ENCODE measurements at regions of chr14 and their contacts with region 1.

Region 1: DNA sequence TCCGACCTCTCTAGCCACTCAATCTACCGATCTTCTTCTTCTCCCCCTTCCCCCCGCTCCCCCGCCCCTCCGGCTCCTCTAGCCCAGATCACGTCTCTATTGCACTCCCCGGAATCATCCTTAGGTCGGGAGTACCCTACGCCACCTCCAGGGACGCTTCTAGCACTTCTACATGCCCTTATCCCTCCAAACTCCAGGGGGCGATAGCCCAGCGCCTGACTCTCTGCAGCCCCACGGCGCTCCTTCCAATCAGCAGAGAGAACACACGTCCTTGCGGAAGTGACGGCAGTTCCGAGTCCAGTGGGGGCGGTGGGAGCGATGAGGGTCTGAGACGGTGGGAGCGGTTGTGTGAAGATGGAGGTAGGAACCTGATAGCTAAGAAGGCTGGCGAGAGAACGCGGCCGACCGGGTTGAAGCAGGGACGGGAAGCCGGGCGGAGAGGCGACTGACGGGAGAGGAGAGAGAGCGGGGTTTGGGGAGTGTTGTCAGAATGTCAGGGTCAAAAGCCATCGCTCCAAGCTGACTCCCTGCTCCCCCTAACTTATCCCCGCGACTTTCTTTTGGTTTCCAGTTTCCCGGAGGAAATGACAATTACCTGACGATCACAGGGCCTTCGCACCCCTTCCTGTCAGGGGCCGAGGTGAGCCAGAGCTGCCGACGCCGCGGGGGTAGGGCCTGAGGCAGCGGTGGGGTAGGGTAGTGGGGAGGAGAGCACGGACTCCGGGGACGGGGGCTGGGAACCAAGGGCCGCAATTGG is at the starts of genes RAB2B and TOX4:
- DNase-seq: peak; percentile 83 to 98 (median 97)
- ATAC-seq: peak; percentile 99
- H3K4me3 ChIP-seq: peak within 1 kb of the TSS; percentile 99
- H3K4me3 Mint-ChIP-seq: peak within 1 kb of the TSS; percentile 96 to 100 (median 99)
- H3K27ac ChIP-seq: peak within 1 kb of the TSS; percentile 88
- H3K27ac Mint-ChIP-seq: peak within 1 kb of the TSS; percentile 93 to 100 (median 98)
- H3K4me1 ChIP-seq: peaks cover 21 to 22% of the 10 kb centered on the region in 2 donors
- H3K4me1 Mint-ChIP-seq: peaks cover 18 to 74% (median 58%) of the 10 kb centered on the region in 7 donors
- H3K27me3 ChIP-seq: no peaks in the 10 kb centered on the region
- H3K27me3 Mint-ChIP-seq: no peaks in the 10 kb centered on the region
- total RNA-seq, gene RAB2B: 26.6 to 32.8 (median 30.5) TPM
- total RNA-seq, gene TOX4: 78.5 to 116 (median 86.5) TPM

Region 2: GRCh38 chr14:21408147-21408546 is 69.0 kb before region 1 on chr14:
- CTCF ChIA-PET with region 1: no interaction called
- POLR2A ChIA-PET with region 1: no interaction called
- intact Hi-C with region 1: no loop called
- DNase-seq: no peak
- ATAC-seq: no peak
- H3K4me3 ChIP-seq: no peak overlapping the region
- H3K4me3 Mint-ChIP-seq: no peak overlapping the region
- H3K27ac ChIP-seq: no peak overlapping the region
- H3K27ac Mint-ChIP-seq: peak overlapping the region in 1 of 9 donors; percentile 28
- H3K4me1 ChIP-seq: no peaks in the 10 kb centered on the region
- H3K4me1 Mint-ChIP-seq: peaks cover 0 to 8% (median 0%) of the 10 kb centered on the region in 7 donors
- H3K27me3 ChIP-seq: no peaks in the 10 kb centered on the region
- H3K27me3 Mint-ChIP-seq: no peaks in the 10 kb centered on the region

Region 3: DNA sequence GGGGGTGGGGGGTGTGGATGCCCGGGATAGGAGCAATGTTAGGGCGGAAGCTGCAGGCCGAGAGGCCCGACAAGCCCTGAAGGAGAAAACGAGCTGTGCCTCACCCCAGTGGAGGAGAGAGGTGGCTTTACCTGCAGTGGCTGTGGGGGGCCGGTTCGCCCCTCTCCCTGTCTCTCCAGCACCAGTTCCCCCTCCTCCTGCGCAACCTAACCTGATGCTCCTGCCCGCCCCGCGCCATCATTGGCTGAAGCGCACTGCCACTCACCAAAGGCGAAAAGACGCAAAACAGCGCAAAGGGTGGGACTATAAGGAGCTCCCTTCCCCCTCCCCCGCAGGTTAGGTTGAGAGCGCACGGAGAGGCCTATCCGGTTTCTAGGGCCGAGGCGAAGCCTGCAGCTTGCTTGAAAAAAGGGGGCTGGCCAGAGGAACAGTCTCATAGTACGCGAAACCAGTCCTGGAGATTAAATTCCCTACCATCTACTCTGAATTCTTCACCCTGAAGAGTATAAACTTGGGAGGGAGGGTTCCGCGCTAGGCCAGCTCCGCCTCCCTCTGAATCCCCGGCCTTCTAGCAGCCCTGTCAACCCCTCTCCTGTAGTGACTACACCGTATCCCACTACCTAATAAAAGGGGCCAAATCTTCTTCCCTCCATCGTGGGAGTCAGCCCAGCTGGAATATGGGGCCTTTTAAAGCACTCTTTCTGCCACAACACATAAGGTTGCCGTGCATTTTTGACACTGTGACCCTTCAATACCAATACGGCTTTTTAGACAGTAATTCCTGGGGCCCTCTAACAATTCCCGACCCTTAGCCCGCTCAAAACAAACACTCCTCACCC is 39.8 kb before region 1 on chr14:
- CTCF ChIA-PET with region 1: interaction called, 4 read pairs
- POLR2A ChIA-PET with region 1: interaction called, 7 read pairs
- intact Hi-C with region 1: loop called (anchors 1 kb)
- DNase-seq: peak; percentile 93 to 100 (median 99)
- ATAC-seq: peak; percentile 100
- H3K4me3 ChIP-seq: peak overlapping the region; percentile 87
- H3K4me3 Mint-ChIP-seq: peak overlapping the region; percentile 86 to 97 (median 92)
- H3K27ac ChIP-seq: peak overlapping the region; percentile 94
- H3K27ac Mint-ChIP-seq: peak overlapping the region; percentile 90 to 98 (median 94)
- H3K4me1 ChIP-seq: peaks cover 13 to 22% of the 10 kb centered on the region in 2 donors
- H3K4me1 Mint-ChIP-seq: peaks cover 43 to 86% (median 68%) of the 10 kb centered on the region in 7 donors
- H3K27me3 ChIP-seq: no peaks in the 10 kb centered on the region
- H3K27me3 Mint-ChIP-seq: no peaks in the 10 kb centered on the region

Region 4: GRCh38 chr14:21498553-21499526 is 21.7 kb after region 1 on chr14:
- CTCF ChIA-PET with region 1: interaction called, 3 read pairs
- POLR2A ChIA-PET with region 1: interaction called, 7 read pairs
- intact Hi-C with region 1: loop called (anchors 1 kb)
- DNase-seq: peak in 7 of 9 donors; percentile 35 to 68 (median 61)
- ATAC-seq: peak; percentile 87
- H3K4me3 ChIP-seq: no peak overlapping the region
- H3K4me3 Mint-ChIP-seq: peak overlapping the region in 8 of 10 donors; percentile 2 to 39 (median 24)
- H3K27ac ChIP-seq: peak overlapping the region; percentile 52
- H3K27ac Mint-ChIP-seq: peak overlapping the region; percentile 56 to 90 (median 79)
- H3K4me1 ChIP-seq: peaks cover 4 to 8% of the 10 kb centered on the region in 2 donors
- H3K4me1 Mint-ChIP-seq: peaks cover 14 to 39% (median 28%) of the 10 kb centered on the region in 7 donors
- H3K27me3 ChIP-seq: no peaks in the 10 kb centered on the region
- H3K27me3 Mint-ChIP-seq: no peaks in the 10 kb centered on the region

Region 5: GRCh38 chr14:21525962-21526671 is 49.0 kb after region 1 on chr14 and contains the start of gene SALL2:
- CTCF ChIA-PET with region 1: no interaction called
- POLR2A ChIA-PET with region 1: interaction called, 15 read pairs
- intact Hi-C with region 1: loop called in 1 of 2 experiments (anchors 5 kb)
- DNase-seq: peak in 8 of 9 donors; percentile 44 to 80 (median 60)
- ATAC-seq: peak; percentile 82
- H3K4me3 ChIP-seq: peak within 1 kb of the TSS; percentile 67
- H3K4me3 Mint-ChIP-seq: peak within 1 kb of the TSS; percentile 65 to 91 (median 88)
- H3K27ac ChIP-seq: peak within 1 kb of the TSS; percentile 75
- H3K27ac Mint-ChIP-seq: peak within 1 kb of the TSS; percentile 43 to 90 (median 81)
- H3K4me1 ChIP-seq: peaks cover 5 to 9% of the 10 kb centered on the region in 2 donors
- H3K4me1 Mint-ChIP-seq: peaks cover 10 to 27% (median 21%) of the 10 kb centered on the region in 7 donors
- H3K27me3 ChIP-seq: no peaks in the 10 kb centered on the region
- H3K27me3 Mint-ChIP-seq: peaks cover 0 to 11% (median 0%) of the 10 kb centered on the region in 5 donors
- total RNA-seq, gene SALL2: 2.3 to 8.3 (median 3.9) TPM

Measured in naive thymus-derived CD4-positive, alpha-beta T cell (primary cell).